Gastrocnemius medialis (tissue), 4 donors: ENCODE measurements at regions of chr12 and their contacts with region 1.

Region 1: DNA sequence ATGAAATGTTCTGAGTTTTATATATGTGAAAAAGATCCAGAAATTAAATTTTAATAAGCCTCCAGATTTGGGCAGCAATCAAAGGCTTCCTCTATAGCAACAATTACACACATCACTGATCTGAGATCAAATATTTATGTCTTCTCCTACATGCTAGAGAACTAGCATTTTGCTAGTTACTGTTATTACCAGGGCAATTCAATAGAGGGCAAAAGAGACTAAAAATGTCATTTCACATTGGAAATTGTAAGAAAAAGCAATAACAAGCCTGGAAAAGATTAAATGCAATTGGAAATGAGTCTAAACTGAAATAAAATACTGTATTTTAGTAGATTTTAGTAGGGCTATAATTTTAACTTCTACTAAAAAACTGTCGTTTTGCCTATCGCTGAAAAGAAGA is 32.6 kb upstream of the ANO6 start:
- DNase-seq: no peak
- ATAC-seq: no peak
- H3K4me3 ChIP-seq: no peak overlapping the region
- H3K27ac ChIP-seq: no peak overlapping the region
- H3K4me1 ChIP-seq: peaks cover 0 to 7% of the 10 kb centered on the region in 2 donors
- H3K27me3 ChIP-seq: no peaks in the 10 kb centered on the region
- CTCF ChIP-seq: peak in 2 of 5 experiments; percentile 25 to 29
- POLR2A ChIP-seq: no peak

Region 2: DNA sequence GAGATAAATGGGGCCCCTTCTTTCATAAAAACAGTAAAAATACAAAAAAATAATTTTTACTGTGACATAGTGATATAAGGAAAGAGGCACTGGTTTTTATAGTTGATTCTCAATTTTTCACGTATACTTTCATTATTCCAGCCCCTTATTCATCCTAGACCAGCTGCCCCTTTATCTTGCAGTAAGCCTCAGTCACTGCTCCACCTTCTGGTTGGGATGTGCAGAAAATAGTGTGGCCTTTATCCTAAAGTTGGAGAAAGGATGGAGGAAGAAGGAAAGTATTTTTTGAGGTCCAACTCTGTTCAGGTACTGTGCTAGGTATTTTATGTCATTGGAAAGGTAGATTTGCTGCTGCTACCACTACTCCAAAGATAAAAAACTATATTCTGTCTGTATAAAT is 205.3 kb after region 1 on chr12:
- in situ Hi-C with region 1: no loop called
- intact Hi-C with region 1: loop called (anchors 5 kb)
- DNase-seq: no peak
- ATAC-seq: no peak
- H3K4me3 ChIP-seq: no peak overlapping the region
- H3K27ac ChIP-seq: no peak overlapping the region
- H3K4me1 ChIP-seq: no peaks in the 10 kb centered on the region
- H3K27me3 ChIP-seq: no peaks in the 10 kb centered on the region
- CTCF ChIP-seq: peak; percentile 22 to 49 (median 41)
- POLR2A ChIP-seq: no peak